Adrenal gland (tissue), 19 donors: ENCODE measurements at regions of chr7 and their contacts with region 1.

Region 1: DNA sequence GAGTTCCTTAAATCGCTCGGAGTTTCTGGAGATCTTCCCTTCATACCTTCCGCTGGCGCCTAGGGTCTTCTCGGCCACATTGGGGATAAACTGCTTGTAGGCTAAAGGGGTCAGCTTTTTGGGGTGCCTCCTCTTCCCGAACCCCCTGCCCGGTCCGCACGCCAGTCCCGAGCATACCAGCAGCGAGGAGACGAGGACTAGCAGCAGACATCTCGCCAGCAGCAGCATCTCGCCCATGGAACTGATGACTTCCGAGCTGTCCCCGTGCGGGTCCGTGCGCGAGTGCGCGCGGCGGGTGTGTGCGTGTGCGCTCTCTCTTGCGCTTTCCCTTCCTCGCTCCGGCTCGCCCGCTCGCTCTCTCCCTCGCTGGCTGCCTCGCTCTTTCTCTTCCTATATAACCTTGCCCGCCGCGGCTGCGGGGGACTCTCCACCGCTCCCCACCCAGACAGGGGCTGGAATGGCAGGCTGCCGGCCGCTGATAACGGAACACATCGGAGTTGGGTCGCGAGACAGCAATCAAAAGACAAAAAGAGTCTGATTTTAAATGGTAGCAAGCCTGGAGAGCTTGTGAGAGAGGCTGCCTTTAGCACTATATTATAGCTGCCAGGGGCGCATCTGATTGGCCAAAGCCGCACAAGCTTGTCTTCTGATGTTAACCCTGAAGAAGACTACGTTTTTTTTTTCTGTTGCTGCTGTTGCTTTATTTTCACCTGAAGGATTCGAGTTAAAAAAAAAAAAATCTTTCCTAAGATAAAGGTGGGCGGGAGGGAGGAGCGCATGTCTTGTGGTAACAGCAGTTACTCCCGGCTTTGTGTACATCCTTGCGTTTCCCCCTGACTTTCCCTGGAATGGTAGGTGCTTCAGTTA is at the start of gene SHH:
- DNase-seq: peak in 2 of 7 donors; percentile 42 to 53
- H3K4me3 ChIP-seq: peak within 1 kb of the TSS in 3 of 4 donors; percentile 47 to 77 (median 56)
- H3K27ac ChIP-seq: peak within 1 kb of the TSS in 2 of 5 donors; percentile 32 to 90
- H3K4me1 ChIP-seq: peaks cover 0 to 21% of the 10 kb centered on the region in 2 donors
- H3K27me3 ChIP-seq: peaks cover 42% of the 10 kb centered on the region
- CTCF ChIP-seq: no peak
- POLR2A ChIP-seq: peak; percentile 39 to 66
- total RNA-seq, gene SHH: 2.1 to 38.0 (median 12.0) TPM

Region 2: GRCh38 chr7:155638366-155638765 is 173.8 kb before region 1 on chr7:
- intact Hi-C with region 1: no loop called
- DNase-seq: no peak
- H3K4me3 ChIP-seq: no peak overlapping the region
- H3K27ac ChIP-seq: no peak overlapping the region
- H3K4me1 ChIP-seq: peaks cover under 1 to 2% of the 10 kb centered on the region in 2 donors
- H3K27me3 ChIP-seq: no peaks in the 10 kb centered on the region
- CTCF ChIP-seq: no peak
- POLR2A ChIP-seq: no peak

Region 3: GRCh38 chr7:155896531-155897263 is 84.6 kb after region 1 on chr7:
- intact Hi-C with region 1: no loop called
- DNase-seq: no peak
- H3K4me3 ChIP-seq: no peak overlapping the region
- H3K27ac ChIP-seq: no peak overlapping the region
- H3K4me1 ChIP-seq: no peaks in the 10 kb centered on the region
- H3K27me3 ChIP-seq: no peaks in the 10 kb centered on the region
- CTCF ChIP-seq: no peak
- POLR2A ChIP-seq: no peak

Region 4: DNA sequence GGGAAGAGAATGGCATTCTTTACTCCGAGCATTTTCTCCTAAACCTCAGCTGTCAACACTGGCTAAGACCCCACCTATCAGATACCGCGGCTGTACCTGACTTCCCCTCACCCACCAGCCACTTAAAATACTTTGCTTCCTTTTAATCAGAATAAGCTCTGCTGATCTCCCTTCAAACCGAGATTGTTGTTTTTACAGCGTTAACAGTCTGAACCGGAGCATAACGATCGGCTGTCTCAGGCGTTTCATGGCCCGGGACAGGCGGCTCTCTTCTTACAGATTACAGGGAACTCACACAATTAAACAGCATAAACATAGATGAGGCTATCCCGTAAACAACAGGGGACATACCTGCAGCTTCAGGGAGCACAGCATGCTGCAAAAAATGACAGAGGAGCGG is 654.1 kb after region 1 on chr7:
- intact Hi-C with region 1: loop called in 1 of 2 experiments (anchors 5 kb)
- DNase-seq: no peak
- H3K4me3 ChIP-seq: no peak overlapping the region
- H3K27ac ChIP-seq: no peak overlapping the region
- H3K4me1 ChIP-seq: no peaks in the 10 kb centered on the region
- H3K27me3 ChIP-seq: no peaks in the 10 kb centered on the region
- CTCF ChIP-seq: no peak
- POLR2A ChIP-seq: no peak

Region 5: GRCh38 chr7:156544919-156545723 is 733.0 kb after region 1 on chr7:
- intact Hi-C with region 1: loop called (anchors 5 to 10 kb)
- DNase-seq: no peak
- H3K4me3 ChIP-seq: no peak overlapping the region
- H3K27ac ChIP-seq: no peak overlapping the region
- H3K4me1 ChIP-seq: no peaks in the 10 kb centered on the region
- H3K27me3 ChIP-seq: no peaks in the 10 kb centered on the region
- CTCF ChIP-seq: no peak
- POLR2A ChIP-seq: no peak